ENCODE measurements at regions of chr4 and their contacts with region 1.

Region 1: DNA sequence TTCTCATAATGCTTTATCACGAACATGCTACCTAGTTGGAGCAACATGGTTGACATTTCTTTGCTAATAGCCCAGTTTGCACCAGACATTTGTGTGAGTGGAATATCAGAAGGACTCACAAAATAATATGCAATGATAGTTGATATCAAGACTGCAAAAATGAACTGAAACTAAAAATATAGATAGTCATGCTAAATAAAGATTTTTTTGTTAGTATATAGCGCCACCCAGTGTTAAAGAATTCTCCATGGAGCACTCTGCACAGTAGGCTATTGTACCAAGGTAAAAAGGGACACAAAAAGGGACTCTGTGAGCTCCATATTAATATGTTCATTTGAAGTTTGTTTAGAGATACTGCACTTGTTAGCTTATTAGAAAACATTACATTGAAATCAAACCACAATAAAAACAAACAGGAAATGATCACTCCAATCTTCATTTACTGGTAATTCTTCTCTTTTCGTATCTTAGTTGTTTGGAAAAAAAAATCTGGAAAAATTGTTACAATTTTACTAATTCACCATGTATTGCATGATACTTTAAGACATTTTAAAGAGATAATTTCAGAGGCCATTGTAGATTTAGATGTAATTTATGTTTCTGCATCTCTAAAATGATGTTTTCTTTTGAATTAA is 1509.6 kb downstream of the ADGRL3 start:
- DNase-seq: peak; percentile 34
- ATAC-seq: peak; percentile 87
- H3K4me3 ChIP-seq: no peak overlapping the region
- H3K27ac ChIP-seq: no peak overlapping the region
- H3K4me1 ChIP-seq: no peaks in the 10 kb centered on the region
- H3K27me3 ChIP-seq: no peaks in the 10 kb centered on the region; a peak in 1 of 5 replicates
- CTCF ChIP-seq: peak; percentile 56
- EP300 ChIP-seq: no peak
- POLR2A ChIP-seq: no peak
- RAD21 ChIP-seq: no peak

Region 2: DNA sequence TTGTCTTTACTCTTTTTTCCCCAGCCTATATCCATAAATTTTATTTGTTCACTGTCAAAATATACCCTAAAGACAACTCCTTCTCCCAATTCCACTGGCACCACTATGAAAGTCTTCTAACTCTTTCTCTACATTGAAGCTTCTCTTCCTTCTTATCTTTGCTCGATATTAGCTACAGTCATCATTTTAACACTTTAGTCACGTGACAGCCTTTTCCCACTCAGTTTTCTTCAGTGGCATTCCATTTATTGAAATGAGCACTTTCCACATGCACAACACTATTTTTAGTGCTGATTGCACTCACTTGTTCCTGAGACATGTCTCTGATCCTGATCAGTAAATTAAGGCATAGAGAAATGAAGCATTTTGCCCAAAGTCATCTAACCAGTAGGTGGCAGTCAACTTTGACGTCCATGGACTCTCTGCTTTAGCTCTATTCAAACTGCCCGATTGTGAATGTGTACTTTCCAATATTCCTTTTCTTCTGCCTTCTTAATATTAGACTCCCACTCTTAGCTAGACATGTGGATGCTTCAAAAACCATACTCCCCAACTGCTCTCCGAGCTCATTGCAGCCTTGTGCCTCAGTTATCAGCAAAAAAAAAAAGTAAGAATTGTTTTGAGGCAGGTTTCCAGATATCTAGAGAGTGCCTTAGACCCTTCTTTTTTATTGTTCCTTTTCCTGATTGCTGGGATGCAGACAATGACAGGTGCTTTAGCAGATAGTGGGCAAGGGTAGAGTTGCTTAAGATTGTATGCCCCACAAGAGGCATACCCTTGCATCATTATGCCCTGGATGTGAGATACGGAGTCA is 1904.0 kb before region 1 on chr4:
- CTCF ChIA-PET with region 1: no interaction called
- POLR2A ChIA-PET with region 1: no interaction called
- in situ Hi-C with region 1: no loop called
- intact Hi-C with region 1: loop called (anchors 1 kb)
- DNase-seq: peak; percentile 32
- ATAC-seq: peak; percentile 80
- H3K4me3 ChIP-seq: no peak overlapping the region
- H3K27ac ChIP-seq: no peak overlapping the region
- H3K4me1 ChIP-seq: no peaks in the 10 kb centered on the region
- H3K27me3 ChIP-seq: no peaks in the 10 kb centered on the region; a peak in 1 of 5 replicates
- CTCF ChIP-seq: peak; percentile 57
- EP300 ChIP-seq: no peak
- POLR2A ChIP-seq: no peak
- RAD21 ChIP-seq: no peak

Region 3: GRCh38 chr4:61517144-61517543 is 1192.6 kb before region 1 on chr4:
- CTCF ChIA-PET with region 1: no interaction called
- POLR2A ChIA-PET with region 1: no interaction called
- in situ Hi-C with region 1: no loop called
- intact Hi-C with region 1: loop called (anchors 5 kb)
- DNase-seq: peak; percentile 56
- ATAC-seq: peak; percentile 100
- H3K4me3 ChIP-seq: no peak overlapping the region
- H3K27ac ChIP-seq: no peak overlapping the region
- H3K4me1 ChIP-seq: no peaks in the 10 kb centered on the region
- H3K27me3 ChIP-seq: no peaks in the 10 kb centered on the region
- CTCF ChIP-seq: peak; percentile 81
- EP300 ChIP-seq: no peak
- POLR2A ChIP-seq: no peak
- RAD21 ChIP-seq: no peak; the same call in 1 of the 2 replicates

Region 4: DNA sequence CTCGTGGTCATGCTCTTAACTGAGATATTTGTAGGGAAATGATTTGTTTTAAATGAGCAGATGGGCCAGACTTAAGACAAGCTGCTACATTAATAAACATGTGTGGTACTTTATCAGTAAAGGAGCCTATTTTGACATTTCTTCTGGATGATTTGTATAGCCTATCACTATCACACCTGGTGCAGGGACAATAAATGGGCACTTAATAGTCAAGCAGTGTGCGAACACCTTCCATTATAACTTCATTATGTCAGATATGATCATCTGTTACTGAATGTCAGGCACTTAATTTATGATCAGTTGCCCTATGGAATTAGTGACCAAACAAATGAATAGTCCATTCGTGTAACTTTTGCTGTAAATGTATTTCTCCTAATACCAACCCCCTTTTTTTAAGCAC is 880.8 kb before region 1 on chr4:
- CTCF ChIA-PET with region 1: no interaction called
- POLR2A ChIA-PET with region 1: no interaction called
- in situ Hi-C with region 1: no loop called
- intact Hi-C with region 1: loop called (anchors 5 kb)
- DNase-seq: no peak
- ATAC-seq: no peak
- H3K4me3 ChIP-seq: no peak overlapping the region
- H3K27ac ChIP-seq: no peak overlapping the region
- H3K4me1 ChIP-seq: no peaks in the 10 kb centered on the region
- H3K27me3 ChIP-seq: no peaks in the 10 kb centered on the region; a peak in 1 of 5 replicates
- CTCF ChIP-seq: no peak
- EP300 ChIP-seq: no peak
- POLR2A ChIP-seq: no peak
- RAD21 ChIP-seq: no peak

Region 5: DNA sequence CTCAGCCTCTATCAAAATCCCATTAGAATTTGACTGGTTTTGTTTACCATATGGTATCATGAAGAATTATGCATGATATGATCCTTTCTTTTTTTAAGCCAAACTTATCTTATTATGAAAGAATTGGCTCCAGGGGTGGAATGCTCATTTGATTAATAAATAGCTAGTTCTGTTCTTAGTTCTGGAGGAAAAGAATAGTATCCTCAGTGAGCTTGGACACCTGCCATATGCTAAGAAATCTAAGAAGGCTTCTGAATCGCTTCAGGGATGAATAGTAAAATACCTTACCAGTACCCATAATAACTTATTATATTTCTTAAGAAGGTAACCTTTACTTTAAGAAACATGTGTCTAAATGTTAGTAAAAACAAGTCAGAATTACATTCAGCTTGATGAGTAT is 706.0 kb before region 1 on chr4:
- CTCF ChIA-PET with region 1: no interaction called
- POLR2A ChIA-PET with region 1: no interaction called
- in situ Hi-C with region 1: no loop called
- intact Hi-C with region 1: no loop called
- DNase-seq: no peak
- ATAC-seq: no peak
- H3K4me3 ChIP-seq: no peak overlapping the region
- H3K27ac ChIP-seq: no peak overlapping the region
- H3K4me1 ChIP-seq: no peaks in the 10 kb centered on the region
- H3K27me3 ChIP-seq: no peaks in the 10 kb centered on the region
- CTCF ChIP-seq: no peak
- EP300 ChIP-seq: no peak
- POLR2A ChIP-seq: no peak
- RAD21 ChIP-seq: no peak

Region 6: DNA sequence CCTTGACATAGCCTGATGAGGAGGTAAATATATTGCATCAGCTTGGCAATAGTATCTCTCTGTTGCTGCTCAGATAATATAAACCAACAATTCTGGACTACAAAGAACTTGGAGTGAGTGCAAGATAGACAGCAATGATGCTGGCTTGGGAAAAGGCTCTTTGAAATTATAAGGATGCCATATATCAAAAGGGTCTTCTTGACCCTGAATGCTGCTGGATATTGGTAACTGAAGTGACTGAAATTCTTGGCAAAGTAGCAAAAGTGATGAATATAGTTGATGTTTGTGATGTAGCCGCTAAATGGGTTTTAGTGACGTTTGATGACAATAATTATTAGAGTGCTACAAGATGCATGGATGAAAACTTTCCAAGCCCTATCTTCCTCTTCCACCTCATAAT is 118.0 kb before region 1 on chr4:
- CTCF ChIA-PET with region 1: interaction called, 8 read pairs
- POLR2A ChIA-PET with region 1: no interaction called
- in situ Hi-C with region 1: loop called (anchors 10 kb)
- intact Hi-C with region 1: loop called (anchors 1 kb)
- DNase-seq: no peak
- ATAC-seq: no peak
- H3K4me3 ChIP-seq: no peak overlapping the region
- H3K27ac ChIP-seq: no peak overlapping the region
- H3K4me1 ChIP-seq: no peaks in the 10 kb centered on the region
- H3K27me3 ChIP-seq: no peaks in the 10 kb centered on the region
- CTCF ChIP-seq: no peak
- EP300 ChIP-seq: no peak
- POLR2A ChIP-seq: no peak
- RAD21 ChIP-seq: no peak